ENCODE measurements at regions of chr16 and their contacts with region 1.

Region 1: GRCh38 chr16:88700636-88701482 is 5.3 kb downstream of the RNF166 start:
- DNase-seq: peak; percentile 95 to 99 (median 97)
- H3K4me3 ChIP-seq: peak overlapping the region; percentile 78 to 98
- H3K4me3 Mint-ChIP-seq: peak overlapping the region; percentile 93 to 96 (median 96)
- H3K27ac ChIP-seq: peak overlapping the region; percentile 85
- H3K27ac Mint-ChIP-seq: peak overlapping the region; percentile 97 to 99 (median 98)
- H3K4me1 ChIP-seq: peaks cover 79% of the 10 kb centered on the region
- H3K4me1 Mint-ChIP-seq: peaks cover 19 to 74% (median 50%) of the 10 kb centered on the region in 4 donors
- H3K27me3 ChIP-seq: no peaks in the 10 kb centered on the region
- H3K27me3 Mint-ChIP-seq: no peaks in the 10 kb centered on the region

Region 2: GRCh38 chr16:88569985-88570690 is 130.7 kb before region 1 on chr16 and contains the start of gene ZC3H18:
- CTCF ChIA-PET with region 1: no interaction called
- POLR2A ChIA-PET with region 1: interaction called, 25 read pairs
- intact Hi-C with region 1: loop called (anchors 1 kb)
- DNase-seq: peak; percentile 93 to 96 (median 96)
- H3K4me3 ChIP-seq: peak within 1 kb of the TSS; percentile 54 to 84
- H3K4me3 Mint-ChIP-seq: peak within 1 kb of the TSS; percentile 85 to 91 (median 90)
- H3K27ac ChIP-seq: peak within 1 kb of the TSS; percentile 76
- H3K27ac Mint-ChIP-seq: peak within 1 kb of the TSS; percentile 87 to 95 (median 90)
- H3K4me1 ChIP-seq: peaks cover 24% of the 10 kb centered on the region
- H3K4me1 Mint-ChIP-seq: peaks cover 14 to 40% (median 26%) of the 10 kb centered on the region in 4 donors
- H3K27me3 ChIP-seq: no peaks in the 10 kb centered on the region
- H3K27me3 Mint-ChIP-seq: no peaks in the 10 kb centered on the region
- total RNA-seq, gene ZC3H18: 84.5 to 91.5 TPM

Region 3: DNA sequence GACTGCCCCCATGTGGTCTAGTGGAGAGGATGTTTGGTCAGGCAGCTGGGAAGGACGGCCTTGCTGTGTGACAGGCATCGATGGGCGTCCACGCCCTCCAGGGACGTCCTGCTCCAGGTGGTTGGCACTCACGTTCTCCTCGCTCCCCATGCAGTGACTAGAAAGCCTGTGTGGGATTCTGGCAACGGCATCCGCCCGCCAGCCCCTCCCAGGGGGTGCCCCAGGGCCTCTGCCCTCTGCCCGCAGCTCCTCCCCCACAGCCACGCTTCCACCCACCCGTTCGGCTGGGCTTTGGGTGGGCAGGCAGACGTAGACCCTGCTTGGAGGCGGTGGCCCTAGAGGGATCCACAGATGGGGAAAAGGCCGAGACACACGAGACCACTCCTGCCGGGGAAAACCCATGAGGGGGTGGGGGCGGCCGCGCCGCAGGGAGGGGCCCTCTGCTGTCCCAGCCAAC is 67.1 kb before region 1 on chr16:
- CTCF ChIA-PET with region 1: interaction called, 3 read pairs
- POLR2A ChIA-PET with region 1: interaction called, 18 read pairs
- intact Hi-C with region 1: loop called (anchors 5 kb)
- DNase-seq: peak; percentile 52 to 77 (median 68)
- H3K4me3 ChIP-seq: peak overlapping the region in 1 of 2 donors; percentile 53
- H3K4me3 Mint-ChIP-seq: peak overlapping the region; percentile 69 to 85 (median 78)
- H3K27ac ChIP-seq: peak overlapping the region; percentile 62
- H3K27ac Mint-ChIP-seq: peak overlapping the region; percentile 66 to 93 (median 79)
- H3K4me1 ChIP-seq: peaks cover 42% of the 10 kb centered on the region
- H3K4me1 Mint-ChIP-seq: peaks cover 14 to 44% (median 28%) of the 10 kb centered on the region in 4 donors
- H3K27me3 ChIP-seq: peaks cover 2% of the 10 kb centered on the region
- H3K27me3 Mint-ChIP-seq: peaks cover 0 to 6% of the 10 kb centered on the region in 2 donors

Region 4: GRCh38 chr16:88650749-88651275 is 50.0 kb before region 1 on chr16 and contains the start of gene CYBA:
- CTCF ChIA-PET with region 1: no interaction called
- POLR2A ChIA-PET with region 1: interaction called, 66 read pairs
- intact Hi-C with region 1: loop called (anchors 1 kb)
- DNase-seq: peak; percentile 81 to 87 (median 84)
- H3K4me3 ChIP-seq: peak within 1 kb of the TSS; percentile 76 to 91
- H3K4me3 Mint-ChIP-seq: peak within 1 kb of the TSS; percentile 89 to 93 (median 91)
- H3K27ac ChIP-seq: peak within 1 kb of the TSS; percentile 91
- H3K27ac Mint-ChIP-seq: peak within 1 kb of the TSS; percentile 93 to 97 (median 95)
- H3K4me1 ChIP-seq: peaks cover 28% of the 10 kb centered on the region
- H3K4me1 Mint-ChIP-seq: peaks cover 7 to 26% (median 12%) of the 10 kb centered on the region in 4 donors
- H3K27me3 ChIP-seq: no peaks in the 10 kb centered on the region
- H3K27me3 Mint-ChIP-seq: no peaks in the 10 kb centered on the region
- total RNA-seq, gene CYBA: 383 to 386 TPM

Region 5: DNA sequence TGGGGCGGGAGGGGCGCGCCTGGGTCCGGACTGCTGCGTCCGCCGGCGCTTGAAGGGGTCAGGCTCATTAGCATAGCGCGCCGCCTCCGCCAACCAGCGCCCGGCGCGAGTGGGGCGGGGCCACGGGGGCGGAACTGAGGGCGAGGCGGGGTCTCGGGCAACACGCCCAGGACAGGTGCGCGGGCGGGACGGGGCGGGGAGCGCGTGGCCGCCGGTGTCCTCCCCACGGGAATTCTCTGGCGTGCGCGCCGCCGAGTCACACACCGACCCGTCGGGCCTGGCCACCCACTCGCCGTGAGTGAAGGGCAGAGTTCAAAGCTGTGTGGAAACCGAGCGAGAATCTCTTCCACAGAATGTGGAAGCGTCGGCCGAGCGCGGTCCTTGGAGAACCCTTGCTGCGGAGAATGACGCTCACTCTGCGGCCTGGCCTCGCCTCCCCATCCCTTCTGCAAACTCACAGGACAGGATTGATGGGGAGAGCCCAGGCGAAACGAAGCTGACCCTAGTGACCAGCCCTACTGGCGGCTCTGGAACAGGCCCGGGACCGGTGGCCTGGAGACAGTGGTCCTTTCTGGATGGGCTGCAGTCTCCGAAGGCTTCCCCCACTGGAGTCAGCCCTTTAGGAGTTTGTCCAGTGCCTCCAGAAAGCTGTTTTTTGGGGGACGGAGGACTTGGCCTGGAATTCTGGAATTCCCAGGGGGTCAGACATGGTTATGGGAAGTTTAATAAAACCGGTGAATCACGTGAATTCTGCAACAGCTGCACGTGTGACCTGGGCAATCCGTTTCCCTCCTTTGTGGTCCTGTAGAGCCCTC is 14.2 kb before region 1 on chr16 and contains the start of gene SNAI3:
- CTCF ChIA-PET with region 1: interaction called, 21 read pairs
- POLR2A ChIA-PET with region 1: interaction called, 249 read pairs
- intact Hi-C with region 1: loop called (anchors 1 kb)
- DNase-seq: peak; percentile 74 to 84 (median 78)
- H3K4me3 ChIP-seq: peak within 1 kb of the TSS; percentile 82 to 90
- H3K4me3 Mint-ChIP-seq: peak within 1 kb of the TSS; percentile 81 to 89 (median 84)
- H3K27ac ChIP-seq: peak within 1 kb of the TSS; percentile 68
- H3K27ac Mint-ChIP-seq: peak within 1 kb of the TSS; percentile 25 to 96 (median 79)
- H3K4me1 ChIP-seq: peaks cover 68% of the 10 kb centered on the region
- H3K4me1 Mint-ChIP-seq: peaks cover 26 to 67% (median 49%) of the 10 kb centered on the region in 4 donors
- H3K27me3 ChIP-seq: no peaks in the 10 kb centered on the region
- H3K27me3 Mint-ChIP-seq: no peaks in the 10 kb centered on the region
- total RNA-seq, gene SNAI3: 14.0 to 15.7 TPM

Region 6: GRCh38 chr16:89241187-89242007 is 540.5 kb after region 1 on chr16:
- CTCF ChIA-PET with region 1: no interaction called
- POLR2A ChIA-PET with region 1: interaction called, 4 read pairs
- intact Hi-C with region 1: loop called (anchors 1 kb)
- DNase-seq: peak; percentile 92 to 97 (median 93)
- H3K4me3 ChIP-seq: peak overlapping the region; percentile 73 to 80
- H3K4me3 Mint-ChIP-seq: peak overlapping the region; percentile 90 to 98 (median 96)
- H3K27ac ChIP-seq: peak overlapping the region; percentile 91
- H3K27ac Mint-ChIP-seq: peak overlapping the region; percentile 95 to 100 (median 99)
- H3K4me1 ChIP-seq: peaks cover 13% of the 10 kb centered on the region
- H3K4me1 Mint-ChIP-seq: peaks cover 8 to 36% (median 18%) of the 10 kb centered on the region in 4 donors
- H3K27me3 ChIP-seq: no peaks in the 10 kb centered on the region
- H3K27me3 Mint-ChIP-seq: no peaks in the 10 kb centered on the region

Region 7: GRCh38 chr16:89383082-89384003 is 682.5 kb after region 1 on chr16:
- CTCF ChIA-PET with region 1: no interaction called
- POLR2A ChIA-PET with region 1: no interaction called
- intact Hi-C with region 1: no loop called
- DNase-seq: no peak
- H3K4me3 ChIP-seq: no peak overlapping the region
- H3K4me3 Mint-ChIP-seq: peak overlapping the region; percentile 61 to 89 (median 76)
- H3K27ac ChIP-seq: no peak overlapping the region
- H3K27ac Mint-ChIP-seq: peak overlapping the region; percentile 8 to 90 (median 82)
- H3K4me1 ChIP-seq: peaks cover 96% of the 10 kb centered on the region
- H3K4me1 Mint-ChIP-seq: peaks cover 56 to 97% (median 77%) of the 10 kb centered on the region in 4 donors
- H3K27me3 ChIP-seq: no peaks in the 10 kb centered on the region
- H3K27me3 Mint-ChIP-seq: no peaks in the 10 kb centered on the region